Ascending aorta (tissue), 2 donors: ENCODE measurements at regions of chr6 and their contacts with region 1.

Region 1: DNA sequence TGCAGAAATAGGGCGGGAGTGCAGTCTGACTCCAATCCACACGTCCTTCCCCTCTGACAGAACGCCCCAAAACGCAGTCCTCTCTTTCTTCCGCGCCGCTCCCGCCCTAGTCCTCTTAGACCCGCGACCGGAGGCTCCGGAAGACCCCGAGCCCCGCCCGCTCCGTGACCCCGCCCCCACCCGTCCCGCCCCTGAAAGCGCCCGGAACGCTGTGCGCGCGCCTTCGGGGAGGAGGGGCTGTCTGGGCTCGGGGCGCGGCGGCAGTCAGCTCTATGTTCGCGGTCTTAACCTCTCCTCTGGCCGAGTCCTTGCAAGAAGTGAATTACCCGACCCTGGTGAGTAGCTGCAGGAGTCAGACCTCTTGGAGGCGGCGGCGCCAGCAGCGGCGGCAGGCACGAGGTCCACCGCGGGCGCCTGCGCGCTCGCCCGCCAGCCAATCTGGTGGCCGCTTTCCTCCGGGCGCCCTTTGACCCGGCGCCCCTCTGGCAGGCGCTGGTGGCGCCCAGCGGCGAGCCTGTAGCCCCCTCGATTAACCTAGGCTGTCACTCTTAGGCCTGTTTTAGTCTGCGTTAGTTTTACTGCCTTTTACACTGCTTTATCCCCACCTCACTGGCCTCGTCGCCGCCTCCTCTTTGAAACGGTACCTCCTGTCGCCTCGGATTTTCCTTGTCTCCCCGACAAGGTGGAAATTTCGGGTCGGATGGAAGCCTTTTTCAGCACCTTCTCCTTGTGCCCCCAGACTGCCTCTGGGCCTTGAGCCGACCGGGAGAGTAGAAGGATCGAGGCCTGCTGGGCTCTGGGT is at the start of gene MANEA:
- DNase-seq: peak; percentile 45 to 91
- H3K4me3 ChIP-seq: peak within 1 kb of the TSS; percentile 68 to 89
- H3K27ac ChIP-seq: peak within 1 kb of the TSS; percentile 94 to 95
- H3K4me1 ChIP-seq: peaks cover 0 to 18% of the 10 kb centered on the region in 2 donors
- H3K27me3 ChIP-seq: no peaks in the 10 kb centered on the region
- CTCF ChIP-seq: no peak
- total RNA-seq, gene MANEA: 1.9 TPM

Region 2: DNA sequence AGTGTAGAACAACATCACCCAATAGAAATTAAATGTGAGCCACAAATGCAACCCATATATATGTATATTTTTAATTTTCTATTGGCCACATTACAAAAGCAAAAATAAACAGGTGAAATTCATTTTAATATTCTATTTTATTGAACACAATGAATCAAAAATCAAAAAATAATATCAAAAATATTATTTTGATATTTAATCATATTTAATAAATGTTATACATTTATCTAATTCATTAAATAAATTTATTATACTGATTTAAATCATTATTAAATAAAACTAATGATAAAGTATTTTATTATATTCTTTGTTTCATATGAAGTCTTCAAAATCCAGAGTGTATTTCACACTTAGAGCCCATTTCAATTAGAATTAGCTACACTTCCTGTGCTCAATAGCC is 98.6 kb before region 1 on chr6:
- intact Hi-C with region 1: no loop called
- DNase-seq: no peak
- H3K4me3 ChIP-seq: no peak overlapping the region
- H3K27ac ChIP-seq: no peak overlapping the region
- H3K4me1 ChIP-seq: no peaks in the 10 kb centered on the region
- H3K27me3 ChIP-seq: no peaks in the 10 kb centered on the region
- CTCF ChIP-seq: no peak

Region 3: DNA sequence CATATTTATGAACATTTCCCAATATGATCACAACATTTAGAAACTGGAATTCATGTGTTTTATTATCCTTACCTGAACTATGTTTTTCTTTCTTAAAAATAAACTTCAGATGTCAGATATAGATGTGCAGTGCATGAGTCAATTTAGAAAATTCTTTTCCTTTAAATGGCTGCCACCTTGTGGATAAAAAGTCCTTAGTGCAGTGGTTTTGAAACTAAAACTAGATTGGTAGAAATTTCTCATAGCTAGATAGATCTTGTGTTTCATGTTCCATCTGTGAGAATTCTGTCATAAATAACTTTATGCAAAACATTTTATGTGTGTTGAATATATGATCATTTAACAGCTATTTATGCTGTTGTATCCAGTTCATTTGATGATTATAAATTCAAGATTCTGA is 1482.0 kb after region 1 on chr6:
- intact Hi-C with region 1: loop called (anchors 10 kb)
- DNase-seq: no peak
- H3K4me3 ChIP-seq: no peak overlapping the region
- H3K27ac ChIP-seq: no peak overlapping the region
- H3K4me1 ChIP-seq: peaks cover 0 to 2% of the 10 kb centered on the region in 2 donors
- H3K27me3 ChIP-seq: no peaks in the 10 kb centered on the region
- CTCF ChIP-seq: peak in 2 of 3 experiments; percentile 45 to 58

Region 4: DNA sequence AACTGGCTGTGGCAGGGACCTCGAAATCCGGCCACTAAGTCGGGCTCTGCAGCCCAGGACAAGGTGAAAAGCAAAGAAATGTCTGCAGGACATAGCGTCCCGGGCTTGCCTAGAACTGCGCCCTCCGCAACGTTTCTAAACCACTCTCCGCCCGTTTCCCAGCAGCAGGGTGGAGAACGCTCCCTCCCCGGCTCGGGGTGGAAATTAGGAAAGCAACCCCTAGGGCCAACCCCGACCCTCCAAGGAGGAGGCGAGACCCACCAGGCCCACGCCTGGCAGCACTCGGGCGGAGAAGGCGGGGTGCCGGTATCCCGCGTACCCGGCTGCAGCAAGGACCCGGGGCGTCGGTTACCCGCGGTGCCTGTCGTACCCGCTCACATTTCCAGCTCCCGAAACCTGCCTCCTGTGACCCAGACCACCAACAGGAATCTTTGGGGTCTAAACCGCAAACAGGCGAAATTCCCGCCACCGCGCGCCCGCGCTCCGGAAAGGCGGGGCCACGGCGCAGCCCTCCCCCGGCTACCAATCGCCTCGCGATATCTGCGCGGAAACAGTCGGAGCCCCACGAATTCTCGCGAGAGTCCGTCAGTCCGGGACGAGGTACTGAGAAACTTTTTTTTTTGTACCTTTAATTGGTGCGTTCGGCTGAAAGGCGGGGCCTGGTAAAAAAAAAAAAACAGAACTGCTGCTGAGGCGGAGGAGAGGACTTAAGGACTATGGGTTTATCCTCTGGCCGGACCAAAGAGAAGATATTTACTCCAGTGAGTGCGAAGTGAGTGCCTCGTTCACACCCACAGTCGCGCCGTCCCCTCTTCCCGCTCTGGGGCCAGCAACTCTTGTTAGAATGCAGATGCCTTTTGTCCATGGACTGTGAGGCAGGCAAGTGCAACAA is 1705.5 kb after region 1 on chr6 and contains the start of gene MMS22L:
- intact Hi-C with region 1: loop called (anchors 2 kb)
- DNase-seq: peak; percentile 73 to 96
- H3K4me3 ChIP-seq: peak within 1 kb of the TSS; percentile 93 to 98
- H3K27ac ChIP-seq: peak within 1 kb of the TSS; percentile 50 to 58
- H3K4me1 ChIP-seq: peaks cover 0 to 4% of the 10 kb centered on the region in 2 donors
- H3K27me3 ChIP-seq: no peaks in the 10 kb centered on the region
- CTCF ChIP-seq: no peak
- total RNA-seq, gene MMS22L: 21.9 TPM